ENCODE measurements at regions of chr14 and their contacts with region 1.

Region 1: GRCh38 chr14:20613094-20614037 is 22.2 kb upstream of the RNASE12 start:
- DNase-seq: peak; percentile 96
- H3K4me3 Mint-ChIP-seq: no peak overlapping the region
- H3K27ac Mint-ChIP-seq: no peak overlapping the region
- H3K4me1 Mint-ChIP-seq: no peaks in the 10 kb centered on the region
- H3K27me3 Mint-ChIP-seq: no peaks in the 10 kb centered on the region
- CTCF ChIP-seq: peak; percentile 80

Region 2: GRCh38 chr14:20332788-20333493 is 280.4 kb before region 1 on chr14 and contains the start of gene CCNB1IP1:
- CTCF ChIA-PET with region 1: interaction called, 152 read pairs
- POLR2A ChIA-PET with region 1: interaction called, 14 read pairs
- intact Hi-C with region 1: no loop called
- DNase-seq: peak; percentile 94
- H3K4me3 Mint-ChIP-seq: peak within 1 kb of the TSS; percentile 93
- H3K27ac Mint-ChIP-seq: peak within 1 kb of the TSS; percentile 94
- H3K4me1 Mint-ChIP-seq: peaks cover 25% of the 10 kb centered on the region
- H3K27me3 Mint-ChIP-seq: no peaks in the 10 kb centered on the region
- CTCF ChIP-seq: no peak
- total RNA-seq, gene CCNB1IP1: 105 and 108 TPM in 2 replicates

Region 3: GRCh38 chr14:20454516-20455354 is 158.6 kb before region 1 on chr14 and contains the starts of genes APEX1 and OSGEP:
- CTCF ChIA-PET with region 1: interaction called, 3 read pairs
- POLR2A ChIA-PET with region 1: interaction called, 26 read pairs
- intact Hi-C with region 1: loop called (anchors 1 kb)
- DNase-seq: peak; percentile 99
- H3K4me3 Mint-ChIP-seq: no peak within 1 kb of the TSS
- H3K27ac Mint-ChIP-seq: no peak within 1 kb of the TSS
- H3K4me1 Mint-ChIP-seq: peaks cover 7% of the 10 kb centered on the region
- H3K27me3 Mint-ChIP-seq: no peaks in the 10 kb centered on the region
- CTCF ChIP-seq: no peak
- total RNA-seq, gene APEX1: 140 and 168 TPM in 2 replicates
- total RNA-seq, gene OSGEP: 27.2 and 34.7 TPM in 2 replicates

Region 4: DNA sequence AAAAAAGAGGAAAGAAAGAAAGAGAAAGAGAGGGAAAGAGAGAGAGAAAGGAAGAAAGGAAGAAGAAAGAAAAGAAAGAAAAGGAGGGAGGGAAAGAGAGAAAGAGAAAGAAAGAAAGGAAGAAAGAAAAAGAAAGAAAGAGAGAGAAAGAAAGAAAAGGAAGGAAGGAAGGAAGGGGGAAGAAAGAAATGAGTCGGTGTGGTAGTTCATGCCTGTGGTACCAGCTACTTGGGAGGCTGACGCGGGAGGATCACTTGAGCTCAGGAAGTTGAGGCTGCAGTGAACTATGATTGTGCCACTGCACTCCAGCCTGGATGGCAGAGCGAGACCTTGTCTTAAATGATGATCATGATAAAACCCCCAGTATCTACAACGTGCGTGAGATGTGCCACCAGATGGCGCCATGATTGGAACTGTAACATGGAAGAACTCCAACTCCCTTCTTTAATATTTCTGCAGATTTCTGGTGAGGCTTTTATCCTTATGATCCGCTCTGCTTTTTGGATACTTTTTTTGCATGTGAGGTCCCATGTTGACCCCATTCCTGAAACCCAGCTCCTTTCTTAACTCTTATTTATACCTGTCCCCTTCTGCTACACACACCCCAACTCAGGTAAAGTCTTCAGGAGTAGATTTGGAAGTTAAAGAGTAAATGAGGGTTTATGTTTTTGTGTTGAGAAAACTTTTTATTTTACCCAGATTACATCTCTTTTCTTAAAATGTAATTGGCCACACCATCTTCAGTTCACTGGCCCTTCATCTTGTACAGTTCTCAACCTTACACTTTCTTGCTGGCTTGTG is 82.4 kb before region 1 on chr14:
- CTCF ChIA-PET with region 1: interaction called, 23 read pairs
- POLR2A ChIA-PET with region 1: no interaction called
- intact Hi-C with region 1: no loop called
- DNase-seq: peak; percentile 80
- H3K4me3 Mint-ChIP-seq: no peak overlapping the region
- H3K27ac Mint-ChIP-seq: no peak overlapping the region
- H3K4me1 Mint-ChIP-seq: no peaks in the 10 kb centered on the region
- H3K27me3 Mint-ChIP-seq: peaks cover 28% of the 10 kb centered on the region
- CTCF ChIP-seq: peak; percentile 44

Region 5: DNA sequence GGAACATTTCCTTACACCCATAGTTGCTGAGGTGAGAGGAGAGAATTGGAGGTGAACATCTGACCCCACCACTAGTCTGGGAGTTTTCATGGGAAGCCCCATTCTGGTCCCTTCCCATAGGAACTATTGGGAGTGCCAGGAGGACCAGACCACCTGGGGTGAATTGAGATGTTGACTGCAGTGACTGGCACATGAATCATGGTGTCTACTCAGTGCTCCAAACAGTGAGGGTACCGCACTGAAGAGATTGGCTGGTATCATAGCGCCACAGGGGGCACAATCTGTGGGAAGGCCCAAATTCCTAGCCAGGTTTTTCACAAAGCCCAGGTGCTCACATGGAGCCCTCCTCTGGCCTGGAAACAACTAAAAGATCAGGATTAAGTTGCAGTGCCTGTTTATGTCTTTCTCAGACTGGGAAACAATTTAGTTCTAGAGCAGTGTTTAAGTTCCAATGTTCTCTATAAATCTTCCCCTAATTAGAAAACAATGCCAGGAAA is 48.8 kb before region 1 on chr14:
- CTCF ChIA-PET with region 1: no interaction called
- POLR2A ChIA-PET with region 1: no interaction called
- intact Hi-C with region 1: no loop called
- DNase-seq: no peak
- H3K4me3 Mint-ChIP-seq: no peak overlapping the region
- H3K27ac Mint-ChIP-seq: no peak overlapping the region
- H3K4me1 Mint-ChIP-seq: no peaks in the 10 kb centered on the region
- H3K27me3 Mint-ChIP-seq: no peaks in the 10 kb centered on the region
- CTCF ChIP-seq: no peak

Region 6: DNA sequence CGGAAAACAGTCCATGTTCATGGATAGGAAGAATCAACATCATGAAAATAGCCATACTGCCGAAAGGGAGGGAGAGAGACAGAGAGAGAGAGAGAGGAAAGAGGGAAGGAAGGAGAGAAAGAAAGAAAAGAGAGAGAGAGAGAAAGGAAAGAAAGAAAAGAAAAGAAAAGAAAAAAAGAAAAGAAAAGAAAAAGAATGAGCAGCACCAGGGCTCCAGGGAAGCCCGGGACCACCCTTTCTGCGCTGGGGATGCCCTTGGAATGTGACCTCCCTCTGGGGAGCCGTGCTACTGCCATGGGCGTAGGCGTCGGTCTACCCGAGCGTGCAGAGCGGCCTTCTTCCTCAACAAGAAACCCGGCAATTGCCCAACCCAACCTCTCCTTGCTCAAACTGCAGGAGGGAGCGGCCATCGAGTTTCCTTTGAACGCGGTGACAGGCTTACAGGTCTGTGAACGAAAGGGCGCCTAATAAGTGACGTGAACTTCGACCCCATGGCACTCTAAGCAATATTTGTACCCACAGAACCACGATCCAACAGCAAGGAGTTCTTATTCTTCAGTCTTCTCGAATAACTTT is 11.2 kb after region 1 on chr14:
- CTCF ChIA-PET with region 1: interaction called, 11 read pairs
- POLR2A ChIA-PET with region 1: interaction called, 11 read pairs
- intact Hi-C with region 1: loop called (anchors 1 kb)
- DNase-seq: peak; percentile 87
- H3K4me3 Mint-ChIP-seq: peak overlapping the region; percentile 79
- H3K27ac Mint-ChIP-seq: peak overlapping the region; percentile 76
- H3K4me1 Mint-ChIP-seq: peaks cover 42% of the 10 kb centered on the region
- H3K27me3 Mint-ChIP-seq: no peaks in the 10 kb centered on the region
- CTCF ChIP-seq: no peak

Region 7: DNA sequence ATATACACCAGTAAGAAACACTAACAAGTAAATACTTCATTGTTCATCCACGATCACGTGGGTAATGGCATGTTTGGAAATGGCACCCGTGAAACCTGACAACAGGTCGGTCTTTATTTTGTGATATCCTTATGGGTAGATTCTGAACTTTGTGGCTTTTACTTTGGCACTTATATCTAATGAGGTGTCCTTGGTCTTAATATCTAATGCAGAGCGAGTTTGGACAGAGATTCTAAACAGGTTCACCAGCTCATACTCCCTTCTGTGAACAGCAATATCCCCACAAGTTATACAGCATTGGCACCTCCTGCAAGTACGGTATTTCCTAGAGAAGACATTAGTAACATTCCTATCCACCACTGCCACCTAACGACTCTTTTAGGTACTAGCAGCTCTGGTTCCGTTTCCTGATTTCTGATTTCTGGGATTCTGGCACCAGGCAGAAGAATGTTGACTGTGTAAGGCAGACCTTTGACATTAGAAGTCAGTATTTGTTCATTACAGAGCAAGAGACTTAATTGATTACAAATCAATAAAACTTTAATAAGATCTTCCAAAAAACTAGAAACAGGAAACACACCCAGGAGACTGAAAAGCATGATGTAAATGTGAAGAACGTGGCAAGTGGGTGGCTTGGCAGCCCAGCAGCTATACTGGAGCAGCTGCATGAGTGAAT is 77.6 kb after region 1 on chr14:
- CTCF ChIA-PET with region 1: interaction called, 103 read pairs
- POLR2A ChIA-PET with region 1: interaction called, 182 read pairs
- intact Hi-C with region 1: loop called (anchors 1 kb)
- DNase-seq: peak; percentile 77
- H3K4me3 Mint-ChIP-seq: peak overlapping the region; percentile 47
- H3K27ac Mint-ChIP-seq: no peak overlapping the region
- H3K4me1 Mint-ChIP-seq: peaks cover 10% of the 10 kb centered on the region
- H3K27me3 Mint-ChIP-seq: no peaks in the 10 kb centered on the region
- CTCF ChIP-seq: peak; percentile 81

Measured in MCF 10A (cell line).